ENCODE measurements at regions of chr19 and their contacts with region 1.

Region 1: GRCh38 chr19:47713046-47714021 is at the start of gene EHD2:
- DNase-seq: peak; percentile 76 to 86
- ATAC-seq: peak; percentile 94 to 96 (median 95)
- H3K4me3 ChIP-seq: peak within 1 kb of the TSS; percentile 58 to 79 (median 69)
- H3K27ac ChIP-seq: peak within 1 kb of the TSS; percentile 77 to 95 (median 86)
- H3K4me1 ChIP-seq: peaks cover 19 to 48% (median 33%) of the 10 kb centered on the region in 9 donors
- H3K27me3 ChIP-seq: peaks cover 0 to 34% (median 4%) of the 10 kb centered on the region in 7 donors
- CTCF ChIP-seq: peak; percentile 93 to 98 (median 96)
- total RNA-seq, gene EHD2: 27.5 to 78.2 (median 40.5) TPM

Region 2: GRCh38 chr19:47573071-47574026 is 140.0 kb before region 1 on chr19 and contains the start of gene ZNF541:
- intact Hi-C with region 1: no loop called
- DNase-seq: peak; percentile 54 to 72
- ATAC-seq: peak; percentile 69 to 92 (median 78)
- H3K4me3 ChIP-seq: peak within 1 kb of the TSS in 9 of 10 donors; percentile 23 to 57 (median 49)
- H3K27ac ChIP-seq: peak within 1 kb of the TSS in 1 of 10 donors; percentile 44
- H3K4me1 ChIP-seq: peaks cover 0 to 6% (median 5%) of the 10 kb centered on the region in 9 donors
- H3K27me3 ChIP-seq: peaks cover 0 to 13% (median 0%) of the 10 kb centered on the region in 7 donors
- CTCF ChIP-seq: no peak
- total RNA-seq, gene ZNF541: 0.56 to 3.7 (median 1.8) TPM

Region 3: DNA sequence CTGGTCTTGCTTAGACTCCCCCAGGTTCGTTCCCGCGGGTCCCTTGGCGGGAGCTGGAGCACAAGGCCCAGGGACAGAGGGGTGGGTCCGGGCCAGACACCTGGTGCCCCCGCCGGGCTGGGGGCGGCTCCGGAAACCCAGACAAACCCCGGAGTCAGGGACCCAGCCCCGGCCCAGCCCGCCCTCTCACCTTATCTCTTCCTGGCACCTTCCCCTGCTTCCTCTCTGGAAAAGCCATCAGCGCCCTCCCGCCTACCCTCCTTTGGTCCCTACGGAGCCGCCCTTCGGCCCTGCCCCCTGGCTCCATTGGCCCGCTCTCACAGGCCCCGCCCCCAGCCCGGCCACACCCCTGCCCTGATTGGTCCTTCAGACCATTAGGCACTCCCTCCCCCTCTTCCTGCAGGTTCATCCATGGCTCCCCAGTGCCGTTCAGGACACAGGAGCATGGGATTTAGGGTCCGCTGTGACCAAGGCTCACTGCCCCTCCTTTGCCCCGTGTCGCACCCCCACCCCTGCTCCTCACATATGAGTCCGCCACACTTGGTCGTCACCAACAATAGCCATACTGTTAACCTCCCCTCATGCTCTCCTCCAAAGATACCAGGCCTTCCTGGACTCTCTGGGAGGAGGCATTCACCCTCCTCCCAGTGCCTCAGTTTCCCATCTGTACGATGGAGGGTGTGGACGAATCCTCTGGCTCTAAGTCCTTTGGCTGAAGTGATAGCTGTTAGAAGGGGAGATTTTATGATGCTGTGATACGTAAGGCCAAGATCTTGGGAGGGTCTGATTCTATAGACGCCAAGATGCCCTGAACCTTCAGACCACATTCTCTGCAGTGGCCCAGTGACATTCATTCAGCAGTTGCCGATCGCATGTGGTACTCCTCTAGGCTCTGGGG is 16.9 kb after region 1 on chr19:
- intact Hi-C with region 1: loop called in 1 of 10 experiments (anchors 2 kb)
- DNase-seq: peak; percentile 86 to 88
- ATAC-seq: peak; percentile 86 to 93 (median 91)
- H3K4me3 ChIP-seq: peak overlapping the region in 7 of 10 donors; percentile 16 to 40 (median 26)
- H3K27ac ChIP-seq: peak overlapping the region; percentile 14 to 88 (median 80)
- H3K4me1 ChIP-seq: peaks cover 13 to 63% (median 42%) of the 10 kb centered on the region in 9 donors
- H3K27me3 ChIP-seq: peaks cover 0 to 25% (median 0%) of the 10 kb centered on the region in 7 donors
- CTCF ChIP-seq: no peak

Region 4: GRCh38 chr19:47745010-47745901 is 31.9 kb after region 1 on chr19 and contains the start of gene NOP53:
- intact Hi-C with region 1: loop called in 8 of 10 experiments (anchors 1 to 2 kb)
- DNase-seq: peak; percentile 97
- ATAC-seq: peak; percentile 62 to 81 (median 72)
- H3K4me3 ChIP-seq: peak within 1 kb of the TSS; percentile 58 to 86 (median 76)
- H3K27ac ChIP-seq: peak within 1 kb of the TSS; percentile 91 to 99 (median 96)
- H3K4me1 ChIP-seq: peaks cover 17 to 62% (median 42%) of the 10 kb centered on the region in 9 donors
- H3K27me3 ChIP-seq: no peaks in the 10 kb centered on the region
- CTCF ChIP-seq: peak in 1 of 9 donors; percentile 9
- total RNA-seq, gene NOP53: 131 to 208 (median 177) TPM

Region 5: GRCh38 chr19:47779524-47780214 is 66.3 kb after region 1 on chr19:
- intact Hi-C with region 1: loop called in 1 of 10 experiments (anchors 5 kb)
- DNase-seq: peak; percentile 77 to 87
- ATAC-seq: peak; percentile 40 to 84 (median 76)
- H3K4me3 ChIP-seq: peak overlapping the region; percentile 78 to 100 (median 91)
- H3K27ac ChIP-seq: peak overlapping the region; percentile 98 to 100 (median 99)
- H3K4me1 ChIP-seq: peaks cover 10 to 59% (median 45%) of the 10 kb centered on the region in 9 donors
- H3K27me3 ChIP-seq: no peaks in the 10 kb centered on the region
- CTCF ChIP-seq: no peak